ENCODE measurements at regions of chr4 and their contacts with region 1.

Region 1: DNA sequence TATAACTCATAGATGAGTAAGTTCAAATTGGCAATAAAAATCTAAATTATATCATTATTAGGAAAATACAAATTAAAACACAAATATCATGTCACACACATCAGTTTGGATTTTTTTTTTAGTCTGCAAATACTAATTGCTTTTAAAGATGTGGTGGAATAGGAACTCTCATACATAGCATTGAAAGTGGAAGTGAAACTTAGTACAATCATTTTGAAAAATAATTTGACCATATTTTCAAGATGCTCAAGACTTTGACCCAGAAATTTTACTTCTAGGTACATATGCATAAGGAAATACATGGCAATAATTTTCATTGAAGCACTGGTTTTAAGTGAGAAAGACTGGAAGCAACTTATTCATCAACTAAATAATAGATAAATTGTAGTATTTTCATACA is 147.5 kb upstream of the SMIM31 start:
- DNase-seq: no peak
- ATAC-seq: no peak
- H3K4me3 ChIP-seq: no peak overlapping the region
- H3K27ac ChIP-seq: no peak overlapping the region
- H3K4me1 ChIP-seq: no peaks in the 10 kb centered on the region
- H3K27me3 ChIP-seq: no peaks in the 10 kb centered on the region
- CTCF ChIP-seq: no peak

Region 2: GRCh38 chr4:164716901-164717300 is 110.4 kb after region 1 on chr4:
- CTCF ChIA-PET with region 1: interaction called, 13 read pairs
- POLR2A ChIA-PET with region 1: no interaction called
- intact Hi-C with region 1: no loop called
- DNase-seq: no peak
- ATAC-seq: no peak
- H3K4me3 ChIP-seq: no peak overlapping the region
- H3K27ac ChIP-seq: no peak overlapping the region
- H3K4me1 ChIP-seq: no peaks in the 10 kb centered on the region
- H3K27me3 ChIP-seq: no peaks in the 10 kb centered on the region
- CTCF ChIP-seq: peak; percentile 37; the same call in 1 of the 2 replicates

Measured in PC-3 (cell line).